HEK293 (cell line): ENCODE measurements at regions of chr6 and their contacts with region 1.

Region 1: GRCh38 chr6:52419809-52420670 is at the start of gene EFHC1:
- H3K4me3 ChIP-seq: peak within 1 kb of the TSS; percentile 66
- H3K27ac ChIP-seq: peak within 1 kb of the TSS; percentile 56; the same call in 1 of the 2 replicates
- H3K4me1 ChIP-seq: 0 out of 2 replicates have a peak, but pooled peaks cover 3% of the 10 kb centered on the region
- CTCF ChIP-seq: peak; percentile 31; the same call in 1 of the 2 replicates

Region 2: GRCh38 chr6:51578994-51579393 is 841.0 kb before region 1 on chr6:
- CTCF ChIA-PET with region 1: no interaction called
- POLR2A ChIA-PET with region 1: no interaction called
- H3K4me3 ChIP-seq: no peak overlapping the region
- H3K27ac ChIP-seq: no peak overlapping the region
- H3K4me1 ChIP-seq: no peaks in the 10 kb centered on the region
- CTCF ChIP-seq: no peak

Region 3: GRCh38 chr6:52407467-52407866 is 12.6 kb before region 1 on chr6:
- CTCF ChIA-PET with region 1: interaction called, 15 read pairs
- POLR2A ChIA-PET with region 1: interaction called, 4 read pairs
- H3K4me3 ChIP-seq: no peak overlapping the region
- H3K27ac ChIP-seq: no peak overlapping the region
- H3K4me1 ChIP-seq: no peaks in the 10 kb centered on the region
- CTCF ChIP-seq: peak; percentile 64

Region 4: DNA sequence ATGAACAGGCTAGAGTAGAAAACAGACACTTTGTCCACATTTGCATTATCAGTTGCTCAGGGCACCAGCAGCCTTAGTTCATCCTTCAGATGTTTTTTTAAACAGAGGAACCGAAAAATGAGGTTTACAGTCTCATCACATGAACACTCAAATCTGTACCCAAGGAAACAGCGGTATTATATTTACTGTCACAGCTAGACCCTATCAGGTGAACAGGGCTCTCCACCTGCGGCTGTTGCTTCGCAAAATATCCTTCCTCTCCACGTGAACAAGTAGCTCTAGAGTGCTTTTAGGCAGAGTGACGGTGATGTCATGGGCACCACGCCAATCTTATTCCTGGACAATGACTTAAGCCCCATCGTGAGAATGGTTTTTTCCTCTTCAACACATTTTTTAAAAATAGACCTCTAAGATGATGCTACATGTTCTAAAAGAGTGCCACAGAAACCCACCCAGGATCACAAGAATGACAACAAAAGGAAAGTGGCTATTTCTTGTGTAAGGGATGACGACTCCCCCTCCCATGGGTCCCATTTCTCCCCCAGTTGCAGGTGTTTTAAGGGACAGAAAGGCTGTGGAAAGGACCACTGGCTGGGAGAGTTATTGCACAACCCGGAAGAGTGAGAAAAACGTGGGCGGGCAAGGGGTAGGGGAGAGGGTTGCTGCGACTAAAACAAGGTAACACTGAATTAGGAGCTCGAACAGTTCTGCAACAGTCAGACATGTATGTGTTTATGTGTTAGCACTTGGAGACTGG is 77.8 kb after region 1 on chr6:
- CTCF ChIA-PET with region 1: interaction called, 20 read pairs
- POLR2A ChIA-PET with region 1: interaction called, 9 read pairs
- H3K4me3 ChIP-seq: no peak overlapping the region
- H3K27ac ChIP-seq: no peak overlapping the region
- H3K4me1 ChIP-seq: peaks cover 10% of the 10 kb centered on the region
- CTCF ChIP-seq: no peak

Region 5: DNA sequence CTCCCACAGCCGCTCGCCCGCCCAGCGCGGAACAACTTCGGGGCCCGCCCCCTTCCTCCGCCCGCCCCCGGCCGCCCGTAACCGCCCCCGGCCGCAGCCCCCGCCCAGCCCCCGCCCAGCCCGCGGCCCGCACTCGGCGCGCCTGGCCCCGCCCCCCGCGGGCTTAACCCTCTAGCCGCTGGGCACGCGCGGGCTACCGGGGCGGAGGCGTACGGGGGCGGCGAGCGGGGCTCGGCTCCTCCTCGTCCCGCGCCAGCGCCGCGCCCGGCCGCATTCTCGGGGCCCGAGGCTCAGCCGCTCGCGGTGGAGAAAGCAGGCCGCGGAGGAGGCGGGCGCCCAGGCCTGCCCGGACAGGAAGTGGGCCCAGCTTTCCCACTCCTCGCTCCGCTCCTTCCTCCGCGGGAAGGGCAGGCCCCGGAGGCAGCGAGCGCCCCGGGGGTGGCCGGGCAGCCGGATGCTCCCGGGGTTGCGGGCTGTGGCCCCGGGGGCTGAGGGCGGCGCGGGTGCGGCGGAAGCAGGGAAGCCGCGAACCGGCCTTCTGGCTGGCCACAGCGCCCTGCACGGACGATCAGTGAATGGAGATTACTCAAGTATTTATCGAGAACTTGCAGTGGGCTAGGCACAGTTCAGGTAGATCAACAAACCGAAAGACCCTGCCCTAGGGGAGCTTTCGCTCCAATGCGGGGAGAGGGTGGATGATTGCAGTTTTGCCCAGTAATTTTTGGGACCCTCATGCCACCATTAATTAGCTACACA is 157.2 kb after region 1 on chr6 and contains the start of gene TRAM2:
- CTCF ChIA-PET with region 1: interaction called, 12 read pairs
- POLR2A ChIA-PET with region 1: interaction called, 14 read pairs
- H3K4me3 ChIP-seq: peak within 1 kb of the TSS; percentile 67
- H3K27ac ChIP-seq: peak within 1 kb of the TSS; percentile 97
- H3K4me1 ChIP-seq: peaks cover 9% of the 10 kb centered on the region
- CTCF ChIP-seq: no peak

Region 6: GRCh38 chr6:52647199-52647598 is 227.2 kb after region 1 on chr6:
- CTCF ChIA-PET with region 1: interaction called, 60 read pairs
- POLR2A ChIA-PET with region 1: interaction called, 8 read pairs
- H3K4me3 ChIP-seq: no peak overlapping the region
- H3K27ac ChIP-seq: no peak overlapping the region
- H3K4me1 ChIP-seq: no peaks in the 10 kb centered on the region; the same call in 1 of the 2 replicates
- CTCF ChIP-seq: no peak

Region 7: GRCh38 chr6:52984247-52984646 is 564.2 kb after region 1 on chr6:
- CTCF ChIA-PET with region 1: no interaction called
- POLR2A ChIA-PET with region 1: no interaction called
- H3K4me3 ChIP-seq: no peak overlapping the region
- H3K27ac ChIP-seq: no peak overlapping the region
- H3K4me1 ChIP-seq: no peaks in the 10 kb centered on the region
- CTCF ChIP-seq: no peak